ENCODE measurements at regions of chr2 and their contacts with region 1.

Region 1: GRCh38 chr2:205482399-205483081 is 199.8 kb upstream of the NRP2 start:
- DNase-seq: no peak
- H3K4me3 ChIP-seq: no peak overlapping the region
- H3K27ac ChIP-seq: no peak overlapping the region
- H3K27me3 ChIP-seq: no peaks in the 10 kb centered on the region
- CTCF ChIP-seq: no peak

Region 2: DNA sequence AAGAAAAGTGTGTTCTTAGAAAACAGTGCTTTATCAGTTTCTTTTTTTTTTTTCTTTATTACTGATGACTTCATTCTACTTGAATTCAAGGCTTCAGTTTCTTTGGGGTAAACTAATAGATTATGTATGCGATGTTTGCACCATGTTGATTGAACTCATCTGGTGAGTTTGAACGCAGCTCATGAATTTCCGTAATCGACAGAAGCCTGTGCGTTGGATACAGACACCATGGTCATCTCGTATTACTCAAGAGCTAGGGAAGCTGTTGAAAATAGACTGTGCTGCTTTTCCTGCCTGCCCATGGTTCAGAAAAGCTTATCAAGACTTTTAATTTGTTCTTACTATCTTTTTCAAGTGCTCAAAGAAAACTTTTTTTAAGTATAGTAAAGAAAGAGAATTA is 14.2 kb after region 1 on chr2:
- CTCF ChIA-PET with region 1: interaction called, 3 read pairs
- POLR2A ChIA-PET with region 1: interaction called, 11 read pairs
- DNase-seq: peak; percentile 95
- H3K4me3 ChIP-seq: no peak overlapping the region
- H3K27ac ChIP-seq: peak overlapping the region; percentile 93
- H3K27me3 ChIP-seq: no peaks in the 10 kb centered on the region
- CTCF ChIP-seq: no peak